ENCODE measurements at regions of chr13 and their contacts with region 1.

Region 1: DNA sequence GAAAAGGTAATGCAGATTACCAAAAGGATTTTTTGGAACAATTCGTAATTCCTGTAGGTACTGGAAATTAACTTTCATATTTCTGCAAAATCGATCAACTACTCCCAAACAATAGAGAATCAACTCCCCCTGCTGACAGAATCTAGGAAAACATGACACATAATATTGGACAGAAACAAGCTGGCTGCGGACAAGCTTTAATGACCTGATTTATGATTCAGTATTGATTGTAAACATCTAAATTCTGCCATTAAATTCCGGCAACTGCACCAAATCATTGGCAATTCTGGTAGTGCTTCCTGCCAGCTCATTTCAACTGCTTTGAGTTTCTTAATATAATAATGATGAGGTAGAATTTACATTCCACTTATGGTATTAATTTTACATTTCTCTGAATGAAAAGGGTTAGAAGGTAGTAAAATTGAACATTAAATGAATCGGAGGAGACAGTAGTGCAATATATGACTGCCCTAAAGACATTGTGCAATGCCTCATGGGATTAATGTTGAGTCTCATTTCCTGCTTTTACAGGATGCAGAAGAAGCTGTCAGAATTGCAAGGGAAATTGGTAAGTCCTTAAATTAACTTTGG is 146.5 kb downstream of the PCCA start:
- ATAC-seq: peak in 3 of 8 experiments; percentile 14 to 42 (median 36)
- H3K4me3 ChIP-seq: no peak overlapping the region
- H3K27ac ChIP-seq: no peak overlapping the region
- H3K4me1 ChIP-seq: peaks cover 9 to 29% of the 10 kb centered on the region in 2 donors

Region 2: GRCh38 chr13:99916366-99917103 is 318.9 kb before region 1 on chr13:
- in situ Hi-C with region 1: loop called in 3 of 9 experiments (anchors 10 to 25 kb)
- ATAC-seq: peak in 4 of 8 experiments; percentile 33 to 95 (median 90)
- H3K4me3 ChIP-seq: no peak overlapping the region
- H3K27ac ChIP-seq: no peak overlapping the region
- H3K4me1 ChIP-seq: peaks cover 0 to 7% of the 10 kb centered on the region in 2 donors